ENCODE measurements at regions of chr5 and their contacts with region 1.

Region 1: GRCh38 chr5:135426102-135427082 is 20.8 kb downstream of the DCANP1 start:
- DNase-seq: peak; percentile 51
- ATAC-seq: peak; percentile 97
- H3K4me3 Mint-ChIP-seq: no peak overlapping the region
- H3K27ac Mint-ChIP-seq: no peak overlapping the region
- H3K4me1 Mint-ChIP-seq: peaks cover 4% of the 10 kb centered on the region
- H3K27me3 Mint-ChIP-seq: peaks cover 12% of the 10 kb centered on the region
- CTCF ChIP-seq: peak; percentile 77

Region 2: DNA sequence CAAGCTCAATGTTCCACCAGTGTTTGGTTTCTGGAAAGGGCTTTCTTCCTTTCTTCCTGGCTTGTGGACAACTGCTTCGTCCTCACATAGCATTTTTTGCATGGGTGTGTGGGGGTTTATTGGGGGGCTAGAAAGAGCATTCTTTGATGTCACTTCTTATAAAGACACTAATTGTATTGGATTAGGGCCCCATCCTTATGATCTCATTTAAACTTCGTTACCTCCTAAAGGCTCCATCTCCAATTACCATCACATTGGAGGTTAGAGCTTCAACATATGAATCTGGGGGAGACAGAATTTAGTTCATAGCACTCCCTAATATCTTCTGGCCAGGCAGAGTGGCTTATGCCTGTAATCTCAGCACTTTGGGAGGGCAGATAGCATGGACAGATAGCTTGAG is 21.3 kb before region 1 on chr5:
- CTCF ChIA-PET with region 1: interaction called, 14 read pairs
- POLR2A ChIA-PET with region 1: interaction called, 7 read pairs
- intact Hi-C with region 1: no loop called
- DNase-seq: no peak
- ATAC-seq: no peak
- H3K4me3 Mint-ChIP-seq: no peak overlapping the region
- H3K27ac Mint-ChIP-seq: no peak overlapping the region
- H3K4me1 Mint-ChIP-seq: peaks cover 4% of the 10 kb centered on the region
- H3K27me3 Mint-ChIP-seq: peaks cover 4% of the 10 kb centered on the region
- CTCF ChIP-seq: no peak

Region 3: GRCh38 chr5:135410348-135410747 is 16.0 kb before region 1 on chr5:
- CTCF ChIA-PET with region 1: interaction called, 14 read pairs
- POLR2A ChIA-PET with region 1: no interaction called
- intact Hi-C with region 1: no loop called
- DNase-seq: no peak
- ATAC-seq: no peak
- H3K4me3 Mint-ChIP-seq: no peak overlapping the region
- H3K27ac Mint-ChIP-seq: no peak overlapping the region
- H3K4me1 Mint-ChIP-seq: no peaks in the 10 kb centered on the region
- H3K27me3 Mint-ChIP-seq: peaks cover 6% of the 10 kb centered on the region
- CTCF ChIP-seq: no peak

Region 4: DNA sequence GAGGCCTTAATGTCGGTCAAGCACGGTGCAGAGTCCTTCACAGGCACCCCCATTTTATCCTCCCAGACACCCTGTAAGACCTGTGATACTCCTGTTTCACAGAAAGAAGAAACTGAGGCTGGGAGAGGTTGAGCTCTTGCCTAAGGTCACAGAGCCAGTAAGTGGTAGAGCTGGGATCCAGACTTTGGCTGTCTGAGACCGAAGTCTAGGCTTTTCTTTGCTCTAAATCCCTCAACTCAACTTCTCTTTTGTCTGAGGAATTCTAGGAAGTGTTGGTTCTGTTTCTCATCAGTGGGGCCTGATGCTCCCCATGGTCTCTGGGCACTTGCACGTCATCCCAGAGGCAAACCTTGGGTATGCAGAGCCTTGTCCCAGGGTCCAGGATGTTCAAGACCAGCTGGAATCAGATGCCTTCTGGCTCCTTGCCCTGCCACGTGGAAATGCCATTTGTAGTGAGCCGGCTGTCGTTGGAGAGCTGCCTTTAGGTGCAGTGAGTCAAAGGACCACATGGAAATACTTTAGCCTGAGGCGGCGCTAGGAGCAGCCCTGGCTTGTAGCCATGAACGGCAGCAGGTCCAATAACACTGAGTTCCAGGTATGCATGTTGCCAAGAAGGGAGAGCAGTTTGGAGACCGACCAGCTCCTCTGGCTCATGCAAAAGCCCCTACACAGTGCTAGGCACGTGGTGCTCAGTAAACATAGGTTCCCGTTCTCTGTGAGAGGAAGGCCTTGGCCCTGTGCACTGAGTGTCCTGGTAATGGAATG is 11.6 kb after region 1 on chr5:
- CTCF ChIA-PET with region 1: interaction called, 15 read pairs
- POLR2A ChIA-PET with region 1: no interaction called
- intact Hi-C with region 1: no loop called
- DNase-seq: no peak
- ATAC-seq: no peak
- H3K4me3 Mint-ChIP-seq: no peak overlapping the region
- H3K27ac Mint-ChIP-seq: no peak overlapping the region
- H3K4me1 Mint-ChIP-seq: no peaks in the 10 kb centered on the region
- H3K27me3 Mint-ChIP-seq: peaks cover 8% of the 10 kb centered on the region
- CTCF ChIP-seq: no peak

Region 5: DNA sequence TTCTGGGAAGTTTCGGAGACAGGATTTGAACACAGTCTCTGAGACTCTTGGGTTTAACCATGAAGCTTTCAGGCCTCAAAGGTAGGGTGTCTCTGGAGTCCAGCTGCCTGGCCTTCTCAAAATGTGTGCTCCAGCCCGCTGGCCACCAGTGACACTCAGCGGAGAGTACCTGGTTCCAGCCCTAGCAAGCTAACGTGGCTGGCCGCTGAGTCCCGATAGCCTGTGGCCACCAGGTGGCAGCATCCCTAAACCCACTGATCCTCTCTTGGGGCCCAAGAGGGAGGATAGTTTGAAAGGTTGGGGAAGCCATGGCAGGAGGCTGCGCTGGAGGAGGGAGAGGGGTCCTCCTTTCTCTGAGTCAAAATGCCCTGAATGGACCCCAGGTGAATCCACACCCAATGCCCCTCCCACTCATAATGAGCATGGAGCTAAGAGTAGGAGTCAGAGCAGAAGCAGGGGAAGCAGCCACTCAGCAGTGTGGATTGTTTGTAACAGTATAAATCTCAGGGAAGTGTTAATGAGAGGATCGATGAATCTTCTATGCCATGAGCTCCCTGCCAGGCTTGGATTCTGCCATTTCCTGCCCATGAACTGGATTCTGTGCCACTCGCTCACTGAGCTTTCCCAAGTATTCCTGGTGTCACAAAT is 31.2 kb after region 1 on chr5:
- CTCF ChIA-PET with region 1: interaction called, 10 read pairs
- POLR2A ChIA-PET with region 1: no interaction called
- intact Hi-C with region 1: no loop called
- DNase-seq: peak; percentile 78
- ATAC-seq: peak; percentile 60
- H3K4me3 Mint-ChIP-seq: no peak overlapping the region
- H3K27ac Mint-ChIP-seq: no peak overlapping the region
- H3K4me1 Mint-ChIP-seq: peaks cover 2% of the 10 kb centered on the region
- H3K27me3 Mint-ChIP-seq: peaks cover 6% of the 10 kb centered on the region
- CTCF ChIP-seq: peak; percentile 73